AG04449 (cell line): ENCODE measurements at regions of chr6 and their contacts with region 1.

Region 1: GRCh38 chr6:37169496-37170272 is at the start of gene PIM1:
- DNase-seq: peak; percentile 76
- H3K4me3 ChIP-seq: peak within 1 kb of the TSS; percentile 96
- CTCF ChIP-seq: no peak

Region 2: DNA sequence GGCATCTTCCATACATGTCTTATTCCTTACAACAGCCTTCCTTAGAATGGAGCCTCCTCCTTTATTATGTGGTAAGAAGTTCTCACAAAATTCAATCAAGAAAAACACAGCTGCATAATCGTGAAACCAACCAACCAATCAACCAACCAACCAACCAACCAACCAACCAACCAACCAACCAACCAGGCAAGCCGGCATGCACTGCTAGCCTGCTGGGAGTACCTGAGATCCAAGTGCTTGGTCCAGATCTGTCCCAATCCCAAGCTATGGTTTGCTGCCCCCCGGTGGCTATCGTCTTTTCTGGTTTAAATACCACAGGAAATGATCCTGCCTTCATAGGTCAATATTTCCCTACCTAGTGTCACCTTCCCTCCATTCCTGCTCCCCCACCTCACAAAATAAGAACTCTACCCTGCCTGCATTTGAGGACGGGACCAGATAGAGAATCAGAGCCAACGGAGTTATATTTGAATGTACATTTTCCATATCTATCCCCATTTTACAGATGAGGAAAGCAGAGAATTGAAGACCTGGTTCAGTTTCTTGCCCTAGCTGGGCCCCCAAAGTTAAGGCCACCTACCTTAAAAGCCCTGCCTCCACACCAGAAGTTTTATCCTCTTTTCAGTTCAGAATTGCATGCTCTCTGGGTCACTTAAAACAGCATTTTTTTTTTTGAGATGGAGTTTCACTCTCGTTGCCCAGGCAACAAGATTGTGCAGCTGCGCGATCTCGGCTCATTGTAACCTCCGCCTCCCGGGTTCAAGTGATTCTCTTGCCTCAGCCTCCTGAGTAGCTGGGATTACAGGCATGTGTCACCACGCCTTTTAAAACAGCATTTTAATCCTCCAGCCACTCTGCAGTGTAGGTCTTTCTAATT is 444.9 kb before region 1 on chr6:
- CTCF ChIA-PET with region 1: no interaction called
- POLR2A ChIA-PET with region 1: no interaction called
- DNase-seq: no peak
- H3K4me3 ChIP-seq: no peak overlapping the region
- CTCF ChIP-seq: peak; percentile 52

Region 3: DNA sequence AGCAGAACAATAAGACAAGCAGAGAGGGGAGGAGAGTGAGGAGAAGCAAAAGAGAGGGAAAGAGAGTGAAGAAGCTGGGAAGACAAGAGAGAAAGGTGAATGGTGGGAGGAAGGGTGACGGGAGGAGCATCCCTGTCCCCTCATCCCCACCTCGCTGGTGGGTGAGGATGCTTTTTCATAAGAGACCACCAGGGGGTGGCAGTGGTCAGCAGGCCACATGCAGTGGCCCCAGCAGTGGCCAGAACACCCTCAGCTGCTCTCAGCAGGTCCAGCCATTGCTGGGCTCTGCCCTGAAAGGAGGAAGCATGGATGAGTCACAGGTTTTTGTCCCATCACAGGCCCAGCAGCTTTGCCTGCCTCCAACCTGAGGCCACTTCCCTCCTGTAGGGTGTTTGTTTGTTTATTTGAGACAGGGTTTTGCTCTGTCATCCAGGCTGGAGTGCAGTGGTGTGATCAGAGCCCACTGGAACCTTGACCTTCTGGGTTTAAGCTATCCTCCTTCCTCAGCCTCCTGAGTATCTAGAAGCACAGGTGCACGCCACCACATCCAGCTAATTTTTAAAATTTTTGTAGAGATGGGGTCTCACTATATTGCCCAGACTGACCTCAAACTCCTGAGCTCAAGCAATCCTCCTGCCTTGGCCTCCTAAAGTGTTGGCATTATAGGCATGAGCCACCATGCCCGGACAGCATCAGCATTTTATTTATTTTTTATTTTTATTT is 140.3 kb before region 1 on chr6:
- CTCF ChIA-PET with region 1: interaction called, 480 read pairs
- POLR2A ChIA-PET with region 1: no interaction called
- DNase-seq: no peak
- H3K4me3 ChIP-seq: no peak overlapping the region
- CTCF ChIP-seq: peak; percentile 79

Region 4: DNA sequence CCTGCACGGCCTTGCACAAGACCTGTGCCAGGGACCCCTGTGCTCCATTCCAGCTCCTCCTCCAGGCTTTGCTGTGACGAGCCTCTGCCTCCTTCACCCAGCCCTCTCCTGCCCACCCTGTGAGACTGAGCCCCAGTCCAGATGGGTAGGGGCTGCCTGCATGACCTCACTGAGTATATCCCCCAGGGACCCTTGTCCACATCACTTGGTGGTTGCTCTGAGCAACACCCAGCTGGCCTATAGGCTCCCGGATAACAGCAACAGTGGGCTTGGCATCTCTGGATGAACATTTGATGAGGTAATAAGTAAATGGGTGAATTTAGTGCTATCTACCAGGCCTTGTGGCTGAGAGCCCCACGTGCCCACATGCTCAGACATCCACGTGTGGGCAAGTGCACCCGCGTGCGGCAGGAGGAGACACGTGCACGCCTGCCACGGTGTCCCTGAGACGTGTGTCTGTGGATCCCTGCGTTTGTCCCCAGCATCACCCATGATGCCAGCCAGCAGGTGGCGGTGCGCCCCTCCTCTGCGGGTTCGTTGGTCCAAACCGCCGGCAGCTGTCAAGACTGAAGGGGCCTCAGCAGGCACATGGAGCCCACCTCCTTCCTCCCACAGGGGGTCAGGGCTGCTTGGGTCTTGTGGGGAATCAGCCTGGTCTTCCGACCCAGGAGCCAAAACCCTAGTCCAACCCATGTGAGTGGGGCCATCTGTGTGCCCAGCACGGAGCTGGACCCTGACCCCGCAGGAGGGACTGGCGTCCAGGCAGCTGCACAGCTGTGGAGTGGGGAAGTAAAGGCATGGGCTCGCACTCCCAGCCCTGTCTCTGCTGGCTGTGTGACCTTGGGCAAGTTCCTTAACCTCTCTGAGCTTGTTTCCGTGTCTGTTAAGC is 118.3 kb before region 1 on chr6:
- CTCF ChIA-PET with region 1: interaction called, 522 read pairs
- POLR2A ChIA-PET with region 1: interaction called, 4 read pairs
- DNase-seq: no peak
- H3K4me3 ChIP-seq: peak overlapping the region; percentile 1; the same call in 1 of the 2 replicates
- CTCF ChIP-seq: peak; percentile 96

Region 5: GRCh38 chr6:37110500-37111461 is 58.9 kb before region 1 on chr6:
- CTCF ChIA-PET with region 1: interaction called, 11 read pairs
- POLR2A ChIA-PET with region 1: no interaction called
- DNase-seq: no peak
- H3K4me3 ChIP-seq: no peak overlapping the region
- CTCF ChIP-seq: no peak

Region 6: GRCh38 chr6:37141281-37142049 is 28.2 kb before region 1 on chr6:
- CTCF ChIA-PET with region 1: interaction called, 8 read pairs
- POLR2A ChIA-PET with region 1: interaction called, 10 read pairs
- DNase-seq: peak; percentile 72
- H3K4me3 ChIP-seq: no peak overlapping the region
- CTCF ChIP-seq: no peak

Region 7: DNA sequence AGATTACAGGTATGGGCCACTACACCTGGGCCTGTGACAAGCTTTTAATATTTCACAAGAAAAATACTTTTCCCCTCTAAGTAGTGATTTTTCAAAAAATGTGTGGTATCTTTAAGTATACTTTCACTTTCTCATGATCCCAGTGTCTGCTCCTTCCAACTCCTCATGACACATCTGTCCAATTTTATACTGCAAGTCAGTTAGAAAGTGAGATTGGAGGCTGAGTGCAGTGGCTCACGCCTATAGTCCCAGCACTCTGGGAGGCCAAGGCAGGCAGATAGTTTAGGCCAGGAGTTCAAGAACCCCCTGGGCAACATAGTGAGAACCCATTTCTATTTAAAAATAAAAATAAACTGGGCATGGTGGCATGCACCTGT is 20.5 kb after region 1 on chr6:
- CTCF ChIA-PET with region 1: interaction called, 21 read pairs
- POLR2A ChIA-PET with region 1: no interaction called
- DNase-seq: no peak
- H3K4me3 ChIP-seq: no peak overlapping the region
- CTCF ChIP-seq: no peak

Region 8: GRCh38 chr6:37289931-37290330 is 120.2 kb after region 1 on chr6:
- CTCF ChIA-PET with region 1: no interaction called
- POLR2A ChIA-PET with region 1: no interaction called
- DNase-seq: no peak
- H3K4me3 ChIP-seq: no peak overlapping the region
- CTCF ChIP-seq: no peak